Posterior cingulate gyrus (tissue), 11 donors: ENCODE measurements at regions of chr9 and their contacts with region 1.

Region 1: GRCh38 chr9:107172160-107172978 is 110.7 kb upstream of the RAD23B start:
- DNase-seq: peak; percentile 38 to 96 (median 84)

Region 2: DNA sequence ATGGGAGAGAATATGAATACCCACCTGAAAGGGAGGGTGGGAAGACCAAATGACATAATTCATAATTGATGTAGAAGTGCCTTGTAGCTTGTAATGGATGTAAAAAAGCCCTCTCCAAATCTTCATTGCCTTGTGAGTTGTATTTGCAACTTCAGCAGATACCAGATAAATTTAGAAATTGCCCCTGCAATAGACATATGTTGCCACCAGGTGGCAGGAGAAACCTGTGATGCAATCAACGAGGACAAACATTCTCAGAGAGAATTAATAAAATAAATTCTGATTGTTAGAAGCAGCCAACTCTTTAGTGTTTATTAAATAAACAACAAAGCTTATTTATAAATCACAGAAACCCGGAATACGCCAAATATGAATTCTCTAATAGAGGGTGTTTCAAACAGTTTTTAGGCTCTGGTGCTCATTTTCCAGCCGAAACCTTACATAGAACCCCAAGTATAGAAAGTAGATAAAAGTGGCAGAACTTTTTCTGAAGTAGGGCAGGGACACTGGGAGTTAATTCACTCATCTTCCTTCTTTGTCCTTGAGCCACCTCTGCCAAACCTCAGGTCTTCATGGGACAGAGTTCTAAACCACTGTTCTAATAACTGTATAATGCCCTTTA is 1330.2 kb before region 1 on chr9:
- intact Hi-C with region 1: loop called (anchors 2 kb)
- DNase-seq: peak in 3 of 10 donors; percentile 22 to 52 (median 34)

Region 3: GRCh38 chr9:105901514-105902109 is 1270.8 kb before region 1 on chr9:
- intact Hi-C with region 1: loop called (anchors 2 kb)
- DNase-seq: peak in 8 of 10 donors; percentile 32 to 91 (median 56)

Region 4: GRCh38 chr9:107044872-107045271 is 127.5 kb before region 1 on chr9:
- intact Hi-C with region 1: no loop called
- DNase-seq: no peak

Region 5: GRCh38 chr9:107137495-107138202 is 34.7 kb before region 1 on chr9:
- intact Hi-C with region 1: loop called (anchors 5 kb)
- DNase-seq: no peak